ENCODE measurements at regions of chr16 and their contacts with region 1.

Region 1: GRCh38 chr16:12067714-12068401 is 91.3 kb downstream of the SNX29 start:
- DNase-seq: peak in 1 of 2 donors; percentile 53
- ATAC-seq: peak in 7 of 8 donors; percentile 55 to 85 (median 73)
- H3K4me3 ChIP-seq: no peak overlapping the region
- H3K27ac ChIP-seq: no peak overlapping the region
- H3K4me1 ChIP-seq: peaks cover 2 to 17% (median 9%) of the 10 kb centered on the region in 9 donors
- H3K27me3 ChIP-seq: no peaks in the 10 kb centered on the region
- CTCF ChIP-seq: peak; percentile 78 to 96 (median 92)

Region 2: DNA sequence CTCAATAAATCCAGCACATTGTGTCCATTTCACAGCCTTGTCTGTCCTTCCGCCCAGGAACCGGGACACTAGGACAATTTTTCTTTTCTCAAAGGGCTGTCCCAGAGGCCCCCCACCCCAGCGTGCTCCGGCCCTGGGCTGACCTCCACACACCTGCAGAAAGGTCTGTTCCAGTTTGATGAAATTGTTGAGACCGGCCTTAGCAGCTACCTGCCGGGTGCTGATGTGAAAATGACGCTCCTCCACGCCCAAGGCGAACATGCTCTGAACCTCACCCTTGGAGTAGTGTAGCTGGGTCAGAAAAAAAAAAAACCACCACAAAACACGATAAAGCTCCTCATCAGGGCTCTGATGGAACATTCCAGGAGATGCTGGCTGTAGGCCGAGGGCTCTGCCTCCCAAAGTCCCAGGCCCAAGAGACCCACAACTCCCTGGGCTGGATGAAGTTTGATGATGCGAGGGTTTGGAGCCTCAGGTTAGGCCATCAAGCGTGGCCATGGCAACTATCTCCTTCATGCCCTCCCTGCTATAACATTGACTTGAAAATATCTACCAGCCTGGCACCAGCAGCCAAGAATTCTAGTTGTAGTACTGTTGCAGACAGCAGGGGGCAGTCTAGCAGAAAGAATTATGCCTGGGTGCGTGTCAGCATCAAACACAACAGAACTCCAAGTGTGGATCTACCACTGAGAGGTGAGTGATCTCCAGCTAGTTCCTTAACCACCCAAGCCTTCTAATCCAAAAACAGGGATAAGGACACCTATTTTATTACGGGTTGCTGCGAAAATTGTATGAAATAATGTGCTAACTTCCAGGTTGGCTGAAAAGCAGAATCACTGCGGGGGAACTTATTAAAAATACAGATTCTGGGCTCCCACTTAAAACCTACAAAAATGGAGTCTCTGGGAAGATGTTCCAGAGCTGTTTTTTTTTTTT is 660.5 kb before region 1 on chr16:
- intact Hi-C with region 1: loop called in 1 of 10 experiments (anchors 10 kb)
- DNase-seq: peak in 1 of 2 donors; percentile 58
- ATAC-seq: peak in 6 of 8 donors; percentile 34 to 76 (median 51)
- H3K4me3 ChIP-seq: no peak overlapping the region
- H3K27ac ChIP-seq: no peak overlapping the region
- H3K4me1 ChIP-seq: peaks cover 0 to 4% (median 0%) of the 10 kb centered on the region in 9 donors
- H3K27me3 ChIP-seq: no peaks in the 10 kb centered on the region
- CTCF ChIP-seq: peak; percentile 38 to 81 (median 66)

Region 3: GRCh38 chr16:11797166-11797956 is 270.5 kb before region 1 on chr16 and contains the start of gene ZC3H7A:
- intact Hi-C with region 1: loop called in 1 of 10 experiments (anchors 10 kb)
- DNase-seq: peak; percentile 96 to 97
- ATAC-seq: peak; percentile 98 to 99 (median 99)
- H3K4me3 ChIP-seq: peak within 1 kb of the TSS; percentile 78 to 100 (median 96)
- H3K27ac ChIP-seq: peak within 1 kb of the TSS; percentile 92 to 100 (median 98)
- H3K4me1 ChIP-seq: peaks cover 3 to 74% (median 64%) of the 10 kb centered on the region in 9 donors
- H3K27me3 ChIP-seq: no peaks in the 10 kb centered on the region
- CTCF ChIP-seq: peak; percentile 66 to 97 (median 83)
- total RNA-seq, gene ZC3H7A: 26.8 to 36.1 (median 30.6) TPM

Region 4: GRCh38 chr16:11871193-11871592 is 196.7 kb before region 1 on chr16:
- intact Hi-C with region 1: loop called in 2 of 10 experiments (anchors 10 kb)
- DNase-seq: no peak
- ATAC-seq: peak in 3 of 8 donors; percentile 40 to 58 (median 44)
- H3K4me3 ChIP-seq: no peak overlapping the region
- H3K27ac ChIP-seq: peak overlapping the region in 4 of 10 donors; percentile 4 to 46 (median 17)
- H3K4me1 ChIP-seq: peaks cover 0 to 34% (median 16%) of the 10 kb centered on the region in 9 donors
- H3K27me3 ChIP-seq: no peaks in the 10 kb centered on the region
- CTCF ChIP-seq: peak in 5 of 9 donors; percentile 11 to 40 (median 30)

Region 5: DNA sequence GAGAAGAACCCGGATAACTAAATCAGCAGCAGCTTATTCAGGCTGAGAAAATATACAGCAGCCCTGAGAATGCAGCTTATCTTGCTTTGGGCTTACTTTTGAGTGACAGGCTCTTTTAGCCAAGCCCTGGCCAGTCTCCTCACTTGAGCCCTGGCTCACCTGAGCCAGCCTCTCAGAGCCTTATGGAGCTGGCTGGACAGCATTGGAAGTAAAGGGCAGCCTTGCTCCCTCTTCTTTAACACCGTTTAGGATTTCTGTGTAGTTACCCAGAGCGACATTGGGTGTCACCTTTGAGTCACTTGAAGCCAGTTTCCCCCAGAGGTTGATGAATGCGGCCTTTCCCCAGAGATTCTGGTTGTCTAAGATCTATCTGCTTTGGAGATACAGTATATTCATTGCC is 118.3 kb before region 1 on chr16:
- intact Hi-C with region 1: loop called in 9 of 10 experiments (anchors 1 to 10 kb)
- DNase-seq: peak in 1 of 2 donors; percentile 23
- ATAC-seq: peak in 6 of 8 donors; percentile 48 to 81 (median 64)
- H3K4me3 ChIP-seq: no peak overlapping the region
- H3K27ac ChIP-seq: no peak overlapping the region
- H3K4me1 ChIP-seq: no peaks in the 10 kb centered on the region
- H3K27me3 ChIP-seq: peaks cover 0 to 8% (median 0%) of the 10 kb centered on the region in 7 donors
- CTCF ChIP-seq: peak; percentile 13 to 62 (median 52)

Region 6: DNA sequence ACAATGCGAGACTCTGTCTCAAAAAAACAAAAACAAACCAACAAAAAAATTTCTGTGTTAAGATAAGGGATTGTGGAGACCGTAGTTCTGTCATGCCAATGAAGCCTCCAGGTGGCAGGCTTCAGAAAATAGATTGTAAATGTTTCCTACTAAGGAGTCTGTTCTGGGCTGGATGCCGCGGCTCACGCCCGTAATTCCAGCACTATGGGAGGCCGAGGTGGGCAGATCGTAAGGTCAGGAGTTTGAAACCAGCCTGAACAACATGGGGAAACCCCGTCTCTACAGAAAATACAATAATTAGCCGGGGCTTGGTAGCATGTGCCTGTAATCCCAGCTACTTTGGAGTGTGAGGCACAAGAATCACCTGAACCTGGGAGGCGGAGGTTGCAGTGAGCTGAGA is 95.7 kb before region 1 on chr16:
- intact Hi-C with region 1: loop called in 6 of 10 experiments (anchors 5 to 10 kb)
- DNase-seq: no peak
- ATAC-seq: no peak
- H3K4me3 ChIP-seq: no peak overlapping the region
- H3K27ac ChIP-seq: no peak overlapping the region
- H3K4me1 ChIP-seq: peaks cover 6 to 13% (median 10%) of the 10 kb centered on the region in 9 donors
- H3K27me3 ChIP-seq: no peaks in the 10 kb centered on the region
- CTCF ChIP-seq: peak in 3 of 9 donors; percentile 17 to 41 (median 19)

Measured in heart right ventricle (tissue), 16 donors.